Activated CD4-positive, alpha-beta T cell treated with anti-CD3 and anti-CD28 coated beads for 36 hours (primary cell): ENCODE measurements at regions of chr7 and their contacts with region 1.

Region 1: DNA sequence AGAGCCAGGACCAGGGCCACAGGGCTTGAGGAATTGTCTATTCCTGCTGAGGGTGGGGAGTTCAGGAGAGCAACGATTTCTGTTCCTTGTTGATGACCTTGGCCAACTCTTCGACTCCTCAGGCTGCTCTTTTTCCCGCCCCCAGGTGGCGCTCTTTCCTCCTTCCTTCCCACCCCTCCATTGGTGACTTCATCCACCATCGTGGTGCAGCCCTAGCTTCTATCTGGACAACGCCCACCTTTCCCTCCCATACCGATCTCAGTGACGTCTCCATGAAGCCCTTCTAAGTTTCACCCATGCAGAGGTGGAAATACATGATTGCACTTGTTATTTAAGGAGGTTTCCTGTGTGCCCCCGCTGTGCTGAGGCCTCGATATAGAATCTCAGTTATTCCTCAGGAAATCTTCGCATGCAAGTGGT is 22.1 kb upstream of the CARD11 start:
- DNase-seq: peak; percentile 85
- ATAC-seq: peak; percentile 24
- H3K4me3 Mint-ChIP-seq: peak overlapping the region; percentile 44
- H3K27ac Mint-ChIP-seq: peak overlapping the region; percentile 91
- H3K4me1 Mint-ChIP-seq: peaks cover 94% of the 10 kb centered on the region
- H3K27me3 Mint-ChIP-seq: no peaks in the 10 kb centered on the region

Region 2: DNA sequence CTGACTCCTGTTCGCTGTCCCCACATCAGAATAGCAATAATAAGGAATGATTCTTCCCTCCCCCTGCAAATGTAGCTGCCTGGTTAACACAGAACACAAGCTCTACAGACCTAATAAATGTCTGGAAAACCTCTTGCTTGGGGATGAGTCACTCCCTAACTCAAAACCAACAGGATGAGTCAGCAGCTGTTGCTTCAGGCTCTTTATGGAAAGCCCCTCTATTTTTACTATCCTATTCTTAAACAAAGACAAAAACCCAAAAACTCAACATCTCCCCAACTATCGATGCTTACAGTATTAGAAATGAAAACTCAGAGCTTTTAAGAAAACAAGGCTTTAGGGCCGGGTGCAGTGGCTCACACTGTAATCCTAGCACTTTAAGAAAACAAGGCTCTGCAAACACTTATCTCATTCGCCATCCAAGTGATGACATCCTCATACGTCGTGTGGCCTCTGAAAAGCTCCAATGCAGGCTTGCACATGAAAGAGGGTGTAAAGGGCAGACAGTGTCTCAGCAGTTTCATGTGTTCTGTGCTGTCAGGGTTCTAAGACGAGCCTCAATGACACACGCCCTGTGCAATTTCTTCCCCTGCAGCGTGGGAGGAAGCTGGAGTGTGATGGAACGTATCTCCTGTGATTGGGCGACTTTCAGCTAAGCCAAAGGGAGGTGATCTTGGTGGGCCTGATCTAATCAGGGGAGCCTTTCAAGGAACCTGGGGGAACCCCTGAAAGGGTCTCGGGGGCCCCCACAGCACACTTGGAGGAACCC is 307.6 kb before region 1 on chr7:
- CTCF ChIA-PET with region 1: no interaction called
- POLR2A ChIA-PET with region 1: no interaction called
- intact Hi-C with region 1: loop called in 1 of 2 experiments (anchors 1 kb)
- DNase-seq: peak; percentile 91
- ATAC-seq: peak; percentile 96
- H3K4me3 Mint-ChIP-seq: peak overlapping the region; percentile 50
- H3K27ac Mint-ChIP-seq: peak overlapping the region; percentile 93
- H3K4me1 Mint-ChIP-seq: peaks cover 43% of the 10 kb centered on the region
- H3K27me3 Mint-ChIP-seq: no peaks in the 10 kb centered on the region

Region 3: GRCh38 chr7:2934211-2934731 is 131.5 kb before region 1 on chr7:
- CTCF ChIA-PET with region 1: interaction called, 3 read pairs
- POLR2A ChIA-PET with region 1: interaction called, 4 read pairs
- intact Hi-C with region 1: loop called in 1 of 2 experiments (anchors 1 kb)
- DNase-seq: peak; percentile 82
- ATAC-seq: peak; percentile 98
- H3K4me3 Mint-ChIP-seq: peak overlapping the region; percentile 43
- H3K27ac Mint-ChIP-seq: peak overlapping the region; percentile 100
- H3K4me1 Mint-ChIP-seq: peaks cover 20% of the 10 kb centered on the region
- H3K27me3 Mint-ChIP-seq: no peaks in the 10 kb centered on the region

Region 4: DNA sequence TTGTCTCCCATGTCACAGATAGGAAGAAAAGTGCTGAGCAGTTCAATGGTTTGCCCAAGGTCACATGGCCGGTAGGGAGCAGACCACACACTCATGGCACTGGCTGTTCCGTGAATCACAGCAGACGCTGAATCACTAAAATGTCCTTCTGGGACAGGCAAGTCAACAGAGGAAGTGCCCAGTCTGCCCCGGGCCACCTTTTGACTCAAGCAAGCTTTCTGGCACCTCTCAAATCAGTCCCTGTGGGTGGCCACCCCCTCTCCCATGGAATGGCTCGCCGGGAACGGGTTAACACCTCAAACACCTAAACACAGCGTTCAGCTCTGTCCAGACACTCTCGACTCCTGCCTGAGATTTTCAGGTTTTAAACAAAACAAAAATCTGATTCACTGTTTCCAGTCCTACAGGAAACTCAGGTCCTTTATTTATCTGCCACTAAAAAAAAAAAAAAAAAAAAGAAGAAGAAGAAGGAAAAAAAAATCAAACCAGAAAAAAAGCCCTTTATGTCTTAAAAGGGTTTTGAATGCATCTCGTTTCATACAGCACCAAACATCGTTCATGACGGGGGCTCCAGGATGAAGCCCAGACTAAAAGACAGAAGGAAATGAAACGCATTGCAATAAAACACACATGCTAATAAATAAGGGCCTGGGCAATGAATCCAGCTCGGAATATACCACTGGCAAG is 37.5 kb before region 1 on chr7:
- CTCF ChIA-PET with region 1: no interaction called
- POLR2A ChIA-PET with region 1: interaction called, 3 read pairs
- intact Hi-C with region 1: loop called (anchors 1 to 5 kb)
- DNase-seq: peak; percentile 84
- ATAC-seq: peak; percentile 95
- H3K4me3 Mint-ChIP-seq: peak overlapping the region; percentile 47
- H3K27ac Mint-ChIP-seq: peak overlapping the region; percentile 84
- H3K4me1 Mint-ChIP-seq: peaks cover 51% of the 10 kb centered on the region
- H3K27me3 Mint-ChIP-seq: no peaks in the 10 kb centered on the region

Region 5: GRCh38 chr7:3087243-3087642 is 21.5 kb after region 1 on chr7:
- CTCF ChIA-PET with region 1: interaction called, 87 read pairs
- POLR2A ChIA-PET with region 1: interaction called, 5 read pairs
- intact Hi-C with region 1: no loop called
- DNase-seq: no peak
- ATAC-seq: no peak
- H3K4me3 Mint-ChIP-seq: no peak overlapping the region
- H3K27ac Mint-ChIP-seq: no peak overlapping the region
- H3K4me1 Mint-ChIP-seq: peaks cover 26% of the 10 kb centered on the region
- H3K27me3 Mint-ChIP-seq: no peaks in the 10 kb centered on the region

Region 6: DNA sequence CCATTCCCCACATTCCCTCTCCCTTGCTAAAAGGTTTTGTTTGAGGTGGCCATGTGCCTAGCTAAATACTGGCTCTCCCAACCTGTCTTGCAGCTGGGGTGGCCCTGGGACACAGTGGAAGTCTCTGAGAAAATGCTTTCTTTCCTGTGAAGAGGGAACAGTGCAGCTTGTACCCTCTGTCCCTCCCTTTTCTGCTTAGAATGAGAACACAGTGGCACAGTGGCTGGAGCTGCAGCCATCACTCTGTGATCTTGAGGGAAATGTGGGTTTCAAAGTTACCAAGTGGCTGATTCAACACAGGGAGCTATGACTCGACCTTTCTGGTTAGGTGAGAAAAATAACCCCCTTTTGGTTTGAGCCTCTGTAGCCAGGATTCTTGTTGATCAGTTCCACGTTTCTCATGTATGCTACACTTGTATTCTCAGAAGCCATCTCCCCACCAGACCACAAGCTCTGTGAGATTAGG is 40.7 kb after region 1 on chr7:
- CTCF ChIA-PET with region 1: interaction called, 3 read pairs
- POLR2A ChIA-PET with region 1: interaction called, 3 read pairs
- intact Hi-C with region 1: loop called in 1 of 2 experiments (anchors 1 kb)
- DNase-seq: peak; percentile 76
- ATAC-seq: peak; percentile 88
- H3K4me3 Mint-ChIP-seq: no peak overlapping the region
- H3K27ac Mint-ChIP-seq: peak overlapping the region; percentile 86
- H3K4me1 Mint-ChIP-seq: peaks cover 90% of the 10 kb centered on the region
- H3K27me3 Mint-ChIP-seq: no peaks in the 10 kb centered on the region

Region 7: GRCh38 chr7:3244241-3244814 is 178.6 kb after region 1 on chr7:
- CTCF ChIA-PET with region 1: no interaction called
- POLR2A ChIA-PET with region 1: no interaction called
- intact Hi-C with region 1: no loop called
- DNase-seq: no peak
- ATAC-seq: no peak
- H3K4me3 Mint-ChIP-seq: no peak overlapping the region
- H3K27ac Mint-ChIP-seq: no peak overlapping the region
- H3K4me1 Mint-ChIP-seq: no peaks in the 10 kb centered on the region
- H3K27me3 Mint-ChIP-seq: no peaks in the 10 kb centered on the region